Dendritic cell treated with granulocyte-macrophage colony-stimulating factor and Interleukin-4, amounts not matched to agents 40 ng/mL and 50 ng/mL, for 4 days (primary cell): ENCODE measurements at regions of chr20 and their contacts with region 1.

Region 1: GRCh38 chr20:53656293-53657202 is 62.9 kb upstream of the ZNF217 start:
- H3K4me3 Mint-ChIP-seq: peak overlapping the region; percentile 64
- H3K27ac Mint-ChIP-seq: peak overlapping the region; percentile 98
- H3K4me1 Mint-ChIP-seq: peaks cover 63% of the 10 kb centered on the region
- H3K27me3 Mint-ChIP-seq: no peaks in the 10 kb centered on the region

Region 2: GRCh38 chr20:53434662-53435061 is 221.9 kb before region 1 on chr20:
- intact Hi-C with region 1: no loop called
- H3K4me3 Mint-ChIP-seq: no peak overlapping the region
- H3K27ac Mint-ChIP-seq: no peak overlapping the region
- H3K4me1 Mint-ChIP-seq: no peaks in the 10 kb centered on the region
- H3K27me3 Mint-ChIP-seq: no peaks in the 10 kb centered on the region

Region 3: GRCh38 chr20:53594068-53595017 is 62.2 kb before region 1 on chr20:
- intact Hi-C with region 1: loop called (anchors 5 kb)
- H3K4me3 Mint-ChIP-seq: peak overlapping the region; percentile 88
- H3K27ac Mint-ChIP-seq: peak overlapping the region; percentile 95
- H3K4me1 Mint-ChIP-seq: peaks cover 39% of the 10 kb centered on the region
- H3K27me3 Mint-ChIP-seq: no peaks in the 10 kb centered on the region

Region 4: GRCh38 chr20:53623454-53624211 is 32.9 kb before region 1 on chr20:
- intact Hi-C with region 1: loop called (anchors 5 kb)
- H3K4me3 Mint-ChIP-seq: peak overlapping the region; percentile 55
- H3K27ac Mint-ChIP-seq: peak overlapping the region; percentile 90
- H3K4me1 Mint-ChIP-seq: peaks cover 29% of the 10 kb centered on the region
- H3K27me3 Mint-ChIP-seq: no peaks in the 10 kb centered on the region

Region 5: GRCh38 chr20:53699958-53700305 is 43.4 kb after region 1 on chr20:
- intact Hi-C with region 1: loop called (anchors 5 kb)
- H3K4me3 Mint-ChIP-seq: no peak overlapping the region
- H3K27ac Mint-ChIP-seq: peak overlapping the region; percentile 91
- H3K4me1 Mint-ChIP-seq: peaks cover 52% of the 10 kb centered on the region
- H3K27me3 Mint-ChIP-seq: no peaks in the 10 kb centered on the region